ENCODE measurements at regions of chr3 and their contacts with region 1.

Region 1: DNA sequence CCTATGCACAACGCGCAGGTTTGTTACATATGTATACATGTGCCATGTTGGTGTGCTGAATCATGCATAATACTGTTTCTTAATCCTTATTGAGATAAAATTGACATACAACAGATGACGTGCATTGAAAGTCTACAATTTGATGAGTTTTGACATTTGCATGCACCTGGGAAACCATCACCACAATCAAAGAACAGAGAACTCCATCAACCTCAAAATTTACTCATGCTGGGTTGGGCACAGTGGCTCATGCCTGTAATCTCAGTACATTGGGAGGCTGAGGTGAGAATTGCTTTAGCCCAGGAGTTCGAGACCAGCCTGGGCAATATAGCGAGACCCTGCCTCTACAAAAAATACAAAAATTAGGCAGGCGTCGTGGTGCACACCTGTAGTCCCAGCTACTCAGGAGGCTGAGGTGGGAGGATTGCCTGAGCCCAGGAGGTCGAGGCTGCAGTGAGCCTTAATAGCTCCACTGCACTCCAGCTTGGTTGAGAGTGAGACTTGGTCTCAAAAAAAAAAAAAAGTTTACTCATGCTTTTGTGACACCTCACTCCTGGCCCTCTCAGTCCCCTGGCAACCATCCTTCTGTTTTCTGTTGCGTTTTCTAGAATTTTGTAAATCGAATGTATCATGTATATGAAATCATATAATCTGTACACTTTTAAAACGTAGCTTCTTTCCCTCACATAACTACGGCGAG is 56.6 kb downstream of the BHLHE40 start:
- DNase-seq: no peak
- ATAC-seq: peak; percentile 72
- H3K4me3 ChIP-seq: no peak overlapping the region
- H3K27ac ChIP-seq: no peak overlapping the region
- H3K4me1 ChIP-seq: peaks cover 14% of the 10 kb centered on the region
- H3K27me3 ChIP-seq: no peaks in the 10 kb centered on the region
- CTCF ChIP-seq: no peak
- EP300 ChIP-seq: no peak
- POLR2A ChIP-seq: no peak
- RAD21 ChIP-seq: no peak

Region 2: GRCh38 chr3:4956738-4957137 is 79.1 kb before region 1 on chr3:
- CTCF ChIA-PET with region 1: no interaction called
- POLR2A ChIA-PET with region 1: no interaction called
- RAD21 ChIA-PET with region 1: no interaction called
- SMC1A ChIA-PET with region 1: no interaction called
- in situ Hi-C with region 1: no loop called
- intact Hi-C with region 1: no loop called
- DNase-seq: no peak
- ATAC-seq: no peak
- H3K4me3 ChIP-seq: no peak overlapping the region
- H3K27ac ChIP-seq: no peak overlapping the region
- H3K4me1 ChIP-seq: no peaks in the 10 kb centered on the region
- H3K27me3 ChIP-seq: no peaks in the 10 kb centered on the region
- CTCF ChIP-seq: no peak
- EP300 ChIP-seq: no peak
- POLR2A ChIP-seq: no peak
- RAD21 ChIP-seq: no peak

Region 3: DNA sequence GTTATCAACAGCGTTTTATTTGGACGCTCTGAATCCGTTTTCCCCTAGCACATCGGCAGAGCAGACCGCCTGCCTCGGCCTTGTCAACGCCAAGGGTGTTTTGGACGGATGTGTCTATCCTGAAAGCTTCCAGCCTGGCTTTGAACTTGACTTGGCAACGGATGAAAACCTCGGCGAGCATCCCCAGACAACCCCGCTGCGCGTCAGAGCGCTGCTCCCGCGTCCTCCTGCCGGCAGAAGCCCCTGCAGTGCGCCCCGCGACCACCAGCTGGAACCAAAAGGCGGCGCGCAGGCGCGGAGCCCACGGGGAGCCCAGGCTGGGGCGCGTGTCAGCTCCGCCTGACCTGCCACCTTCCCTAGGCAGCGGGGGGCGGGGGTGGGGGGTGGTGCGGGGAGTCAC is 60.0 kb after region 1 on chr3:
- CTCF ChIA-PET with region 1: no interaction called
- POLR2A ChIA-PET with region 1: interaction called, 12 read pairs
- RAD21 ChIA-PET with region 1: no interaction called
- SMC1A ChIA-PET with region 1: no interaction called
- in situ Hi-C with region 1: no loop called
- intact Hi-C with region 1: no loop called
- DNase-seq: no peak
- ATAC-seq: peak; percentile 66
- H3K4me3 ChIP-seq: no peak overlapping the region
- H3K27ac ChIP-seq: no peak overlapping the region
- H3K4me1 ChIP-seq: no peaks in the 10 kb centered on the region
- H3K27me3 ChIP-seq: peaks cover 4 to 5% of the 10 kb centered on the region in 2 experiments; a peak in 3 of 4 replicates
- CTCF ChIP-seq: no peak
- EP300 ChIP-seq: no peak
- POLR2A ChIP-seq: no peak
- RAD21 ChIP-seq: no peak